ENCODE measurements at regions of chr20 and their contacts with region 1.

Region 1: DNA sequence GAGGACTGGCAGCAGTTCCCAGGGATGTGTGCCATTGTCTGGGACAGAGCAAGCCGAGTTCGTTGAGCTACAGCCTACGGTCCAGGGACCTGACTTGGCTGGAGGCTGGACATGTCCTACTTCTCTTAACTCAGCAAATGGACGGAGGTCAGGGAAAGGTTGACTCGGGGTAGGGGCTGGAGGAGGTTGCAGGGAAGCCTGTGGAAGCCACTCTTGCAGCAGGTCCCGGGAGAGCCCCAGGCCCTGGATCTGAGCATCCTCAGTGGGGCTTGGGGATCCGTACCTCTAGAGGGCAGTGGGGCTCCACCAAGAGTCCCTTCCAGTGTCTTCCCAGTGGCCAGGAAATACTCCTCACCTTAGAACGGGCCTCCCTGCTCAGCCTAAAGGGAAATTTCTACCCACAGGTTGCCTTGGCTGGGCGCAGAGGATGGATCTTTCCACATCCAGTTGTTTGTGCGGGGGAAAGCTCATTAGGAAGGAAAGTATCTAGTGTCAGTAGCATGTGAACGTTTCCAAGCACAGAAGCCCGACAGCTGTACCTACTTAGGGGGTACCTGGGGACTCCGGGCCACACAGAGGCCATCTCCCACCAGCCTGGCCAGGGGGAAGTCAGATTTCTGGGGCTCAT is 170.2 kb downstream of the NFATC2 start:
- DNase-seq: peak; percentile 62
- H3K4me3 ChIP-seq: no peak overlapping the region
- H3K27ac ChIP-seq: no peak overlapping the region
- H3K4me1 ChIP-seq: peaks cover under 1% of the 10 kb centered on the region
- H3K27me3 ChIP-seq: no peaks in the 10 kb centered on the region
- CTCF ChIP-seq: peak; percentile 82 to 94

Region 2: GRCh38 chr20:50120897-50121693 is 1251.2 kb before region 1 on chr20:
- CTCF ChIA-PET with region 1: no interaction called
- dilution Hi-C with region 1: no loop called
- in situ Hi-C with region 1: no loop called
- intact Hi-C with region 1: no loop called
- DNase-seq: no peak
- H3K4me3 ChIP-seq: no peak overlapping the region
- H3K27ac ChIP-seq: no peak overlapping the region
- H3K4me1 ChIP-seq: peaks cover 4% of the 10 kb centered on the region
- H3K27me3 ChIP-seq: no peaks in the 10 kb centered on the region
- CTCF ChIP-seq: peak; percentile 96 to 99

Region 3: GRCh38 chr20:51306503-51307358 is 65.6 kb before region 1 on chr20:
- CTCF ChIA-PET with region 1: no interaction called
- dilution Hi-C with region 1: no loop called
- in situ Hi-C with region 1: no loop called
- intact Hi-C with region 1: no loop called
- DNase-seq: peak; percentile 41
- H3K4me3 ChIP-seq: no peak overlapping the region
- H3K27ac ChIP-seq: no peak overlapping the region
- H3K4me1 ChIP-seq: no peaks in the 10 kb centered on the region
- H3K27me3 ChIP-seq: no peaks in the 10 kb centered on the region
- CTCF ChIP-seq: peak; percentile 74 to 94

Region 4: GRCh38 chr20:51966291-51966971 is 594.1 kb after region 1 on chr20:
- CTCF ChIA-PET with region 1: no interaction called
- dilution Hi-C with region 1: no loop called
- in situ Hi-C with region 1: no loop called
- intact Hi-C with region 1: loop called (anchors 2 kb)
- DNase-seq: peak; percentile 36
- H3K4me3 ChIP-seq: no peak overlapping the region
- H3K27ac ChIP-seq: no peak overlapping the region
- H3K4me1 ChIP-seq: no peaks in the 10 kb centered on the region
- H3K27me3 ChIP-seq: no peaks in the 10 kb centered on the region
- CTCF ChIP-seq: peak; percentile 46 to 76

Measured in mammary epithelial cell (primary cell).